ENCODE measurements at regions of chr12 and their contacts with region 1.

Region 1: GRCh38 chr12:54214553-54215406 is 26.0 kb upstream of the SMUG1 start:
- DNase-seq: peak; percentile 95
- H3K4me3 Mint-ChIP-seq: peak overlapping the region; percentile 61
- H3K27ac Mint-ChIP-seq: no peak overlapping the region
- H3K4me1 Mint-ChIP-seq: peaks cover 21% of the 10 kb centered on the region
- H3K27me3 Mint-ChIP-seq: peaks cover 4% of the 10 kb centered on the region

Region 2: GRCh38 chr12:53974084-53975063 is 240.4 kb before region 1 on chr12 and contains the start of gene HOTAIR:
- CTCF ChIA-PET with region 1: no interaction called
- intact Hi-C with region 1: no loop called
- DNase-seq: peak; percentile 34
- H3K4me3 Mint-ChIP-seq: peak within 1 kb of the TSS; percentile 45
- H3K27ac Mint-ChIP-seq: peak within 1 kb of the TSS; percentile 61
- H3K4me1 Mint-ChIP-seq: peaks cover 20% of the 10 kb centered on the region
- H3K27me3 Mint-ChIP-seq: peaks cover 84% of the 10 kb centered on the region
- total RNA-seq, gene HOTAIR: not detected

Region 3: DNA sequence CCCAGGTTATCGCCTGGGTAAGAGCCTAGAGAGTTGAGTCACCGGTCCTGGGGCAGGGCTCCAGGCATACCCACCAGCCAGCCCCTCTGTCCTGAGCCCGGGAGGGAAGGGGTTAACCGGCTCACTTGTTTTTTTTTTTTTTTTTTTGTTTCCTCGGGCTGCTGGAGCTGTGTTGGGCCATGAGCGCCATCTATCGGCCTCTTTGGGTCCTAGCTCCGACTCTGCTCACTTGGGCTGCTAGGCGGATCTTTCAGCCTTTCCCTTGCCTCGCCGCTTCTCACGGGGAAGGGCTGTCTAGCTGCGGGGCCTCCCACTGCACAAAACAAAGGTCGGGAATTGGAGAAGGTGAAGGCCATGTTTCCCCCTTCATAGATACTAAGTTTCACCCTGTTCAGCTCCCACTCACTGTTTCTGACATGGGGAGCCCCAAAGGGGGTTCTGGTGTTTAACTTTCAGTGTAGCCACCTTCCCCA is 23.2 kb before region 1 on chr12:
- CTCF ChIA-PET with region 1: interaction called, 39 read pairs
- intact Hi-C with region 1: loop called (anchors 2 kb)
- DNase-seq: peak; percentile 84
- H3K4me3 Mint-ChIP-seq: no peak overlapping the region
- H3K27ac Mint-ChIP-seq: no peak overlapping the region
- H3K4me1 Mint-ChIP-seq: peaks cover 16% of the 10 kb centered on the region
- H3K27me3 Mint-ChIP-seq: peaks cover 35% of the 10 kb centered on the region

Region 4: GRCh38 chr12:54228471-54228870 is 13.7 kb after region 1 on chr12:
- CTCF ChIA-PET with region 1: interaction called, 13 read pairs
- intact Hi-C with region 1: no loop called
- DNase-seq: no peak
- H3K4me3 Mint-ChIP-seq: no peak overlapping the region
- H3K27ac Mint-ChIP-seq: no peak overlapping the region
- H3K4me1 Mint-ChIP-seq: peaks cover 1% of the 10 kb centered on the region
- H3K27me3 Mint-ChIP-seq: no peaks in the 10 kb centered on the region

Region 5: DNA sequence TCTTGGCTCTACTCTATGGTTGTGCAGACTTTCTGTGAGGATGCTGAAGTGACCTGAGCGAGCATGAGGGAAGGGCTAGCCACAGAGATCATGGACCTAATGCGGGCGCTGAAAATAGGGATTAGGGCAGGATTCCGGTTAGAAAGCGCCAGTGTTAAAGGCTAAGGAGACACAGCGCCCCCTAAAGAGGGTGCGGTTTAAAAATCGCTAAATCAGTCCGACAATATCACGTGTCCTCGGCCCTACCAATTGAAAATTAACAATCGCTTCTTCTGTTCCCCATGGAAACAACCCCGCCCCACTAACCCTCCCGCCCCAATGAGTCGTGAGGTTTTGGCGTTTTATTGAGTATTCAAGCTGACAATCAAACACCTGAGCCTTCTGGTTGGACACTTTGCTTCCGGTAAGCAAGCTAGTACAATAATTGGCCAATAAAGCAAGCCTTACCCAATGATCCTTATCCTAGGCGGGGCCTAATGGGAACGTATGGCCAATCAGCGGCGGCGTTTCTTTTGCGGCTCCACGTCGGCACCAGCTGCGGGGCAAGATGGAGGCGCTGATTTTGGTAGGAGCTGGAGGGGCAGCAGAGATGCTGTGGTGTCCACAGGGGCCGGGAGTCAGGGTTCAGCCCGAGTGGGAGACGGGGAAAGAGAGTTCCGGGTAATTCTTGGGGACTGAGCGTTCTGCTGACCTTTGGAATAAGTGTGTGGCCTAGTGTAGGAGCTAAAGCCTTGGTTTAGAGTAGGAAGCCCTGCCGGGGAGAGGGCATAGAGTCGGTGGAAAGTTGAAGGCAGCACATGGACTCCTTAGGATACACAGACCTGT is 110.0 kb after region 1 on chr12 and contains the start of gene COPZ1:
- CTCF ChIA-PET with region 1: interaction called, 6 read pairs
- intact Hi-C with region 1: loop called (anchors 1 kb)
- DNase-seq: peak; percentile 98
- H3K4me3 Mint-ChIP-seq: peak within 1 kb of the TSS; percentile 100
- H3K27ac Mint-ChIP-seq: peak within 1 kb of the TSS; percentile 93
- H3K4me1 Mint-ChIP-seq: peaks cover 44% of the 10 kb centered on the region
- H3K27me3 Mint-ChIP-seq: no peaks in the 10 kb centered on the region
- total RNA-seq, gene COPZ1: 98.0 to 105 TPM

Region 6: DNA sequence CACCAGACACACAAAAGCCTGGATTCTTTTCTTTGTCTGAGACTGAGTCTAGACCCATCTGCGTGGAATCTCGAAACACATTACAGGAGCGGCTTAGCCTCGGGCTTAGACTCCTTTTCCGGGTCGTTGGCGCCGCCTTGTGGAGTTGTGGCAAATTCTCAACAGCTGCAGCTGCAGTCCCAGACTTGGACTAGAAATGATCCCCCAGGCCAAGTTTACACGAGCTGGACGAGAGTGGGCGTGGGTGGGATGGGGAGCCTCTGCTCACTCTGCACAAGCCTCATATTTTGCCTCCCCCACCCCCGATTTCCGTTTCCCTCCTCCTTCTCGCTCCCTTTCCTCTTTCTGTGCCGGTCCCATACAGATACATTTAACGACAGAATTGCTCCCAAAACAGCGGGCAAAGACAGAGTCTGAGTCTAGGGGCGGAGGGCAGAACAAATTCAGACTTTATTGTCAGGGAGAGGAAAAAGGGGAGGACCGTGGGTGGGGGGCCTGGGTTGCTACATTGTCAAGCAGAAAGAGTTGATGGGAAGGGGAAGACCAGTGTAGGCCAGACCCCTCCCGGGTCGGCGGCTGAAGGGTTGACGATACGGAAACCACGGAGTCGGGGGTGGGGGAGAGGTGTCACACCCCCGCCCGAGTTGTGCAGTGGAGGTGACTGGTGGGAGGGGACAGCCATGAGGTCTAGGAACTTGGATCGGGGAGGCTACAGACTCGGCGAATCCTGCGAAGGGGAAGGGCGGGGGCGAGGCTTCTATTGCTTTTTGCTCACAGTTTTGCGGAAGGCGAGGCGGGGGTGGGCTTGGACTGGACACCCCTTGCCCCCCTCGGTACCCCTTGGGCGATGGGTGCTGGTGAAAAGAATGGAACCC is 154.2 kb after region 1 on chr12:
- CTCF ChIA-PET with region 1: interaction called, 16 read pairs
- intact Hi-C with region 1: loop called (anchors 1 kb)
- DNase-seq: peak; percentile 97
- H3K4me3 Mint-ChIP-seq: peak overlapping the region; percentile 23
- H3K27ac Mint-ChIP-seq: no peak overlapping the region
- H3K4me1 Mint-ChIP-seq: peaks cover 41% of the 10 kb centered on the region
- H3K27me3 Mint-ChIP-seq: no peaks in the 10 kb centered on the region